GM13977 (cell line): ENCODE measurements at regions of chr14 and their contacts with region 1.

Region 1: GRCh38 chr14:103078093-103078749 is 5.8 kb upstream of the LBHD2 start:
- DNase-seq: peak; percentile 92
- CTCF ChIP-seq: peak; percentile 86

Region 2: DNA sequence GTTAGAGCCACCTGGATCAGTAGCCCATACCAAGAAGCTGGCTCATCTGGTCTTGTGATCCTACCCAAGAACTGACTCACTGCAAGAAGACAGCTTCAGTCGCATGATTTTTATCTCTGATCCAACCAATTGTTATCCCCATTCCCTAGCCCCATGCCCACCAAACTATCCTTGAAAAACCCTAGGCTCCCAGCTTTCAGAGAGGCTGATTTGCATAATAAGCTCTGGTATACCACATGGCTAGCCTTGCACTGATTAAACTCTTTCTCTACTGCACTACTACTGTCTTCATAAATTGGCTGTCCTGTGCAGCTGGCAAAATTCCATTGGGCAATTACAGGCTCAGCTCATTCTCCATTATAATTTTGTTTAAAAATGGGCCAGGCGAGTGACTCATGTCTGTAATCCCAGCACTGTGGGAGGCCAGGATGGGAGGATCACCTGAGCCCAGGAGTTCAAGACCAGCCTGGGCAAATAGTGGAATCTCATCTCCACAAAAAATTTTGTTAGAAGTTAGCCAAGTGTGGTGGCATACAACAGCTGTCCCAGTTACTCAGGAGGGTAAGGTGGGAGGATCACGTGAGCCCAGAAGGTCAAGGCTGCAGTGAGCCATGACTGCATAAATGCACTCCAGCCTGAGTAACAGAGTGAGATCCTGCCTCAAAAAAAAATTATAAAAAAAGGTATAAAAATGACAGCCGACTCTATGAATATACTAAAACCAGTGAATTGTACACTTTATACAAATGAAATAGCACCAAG is 179.2 kb after region 1 on chr14:
- in situ Hi-C with region 1: no loop called
- DNase-seq: no peak
- CTCF ChIP-seq: no peak

Region 3: GRCh38 chr14:103292426-103293374 is 214.5 kb after region 1 on chr14:
- in situ Hi-C with region 1: loop called (anchors 25 kb)
- DNase-seq: peak; percentile 91
- CTCF ChIP-seq: peak; percentile 94